B cell (primary cell): ENCODE measurements at regions of chr21 and their contacts with region 1.

Region 1: DNA sequence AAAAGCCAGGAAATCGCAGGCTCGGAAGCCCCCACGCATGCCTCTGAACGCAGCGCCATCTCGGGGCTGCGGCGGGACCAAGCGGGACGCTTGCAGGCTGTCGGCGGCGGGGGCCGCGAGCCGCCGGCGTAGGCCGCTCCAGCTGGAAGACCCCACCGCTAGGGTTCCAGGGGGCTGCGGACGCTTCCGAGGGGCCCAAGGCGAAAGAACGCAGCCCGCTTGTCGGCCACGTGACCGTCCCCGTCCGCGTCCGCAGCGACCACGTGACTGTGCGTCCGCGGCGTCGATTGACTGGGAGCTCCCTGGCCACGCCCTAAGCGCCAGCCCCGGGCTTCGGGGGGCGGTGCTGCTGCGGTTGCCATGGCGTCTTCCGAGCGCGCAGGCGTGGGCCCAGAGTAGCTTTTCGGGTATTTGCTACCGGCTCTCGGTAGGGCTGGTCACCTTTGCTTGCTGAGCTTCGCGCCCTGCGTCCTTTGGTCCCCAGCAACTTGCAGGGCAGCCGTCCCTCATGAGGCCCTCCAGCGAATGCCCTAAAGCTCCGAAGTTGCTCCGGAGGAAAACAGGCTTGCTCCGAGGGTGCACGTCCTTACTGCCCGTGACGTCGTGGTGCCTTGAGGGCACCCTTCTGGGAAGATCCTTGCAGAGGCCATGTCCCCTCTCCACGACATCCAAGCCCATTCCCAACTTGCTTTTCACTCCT is 197.2 kb downstream of the DYRK1A start:
- DNase-seq: peak; percentile 94
- ATAC-seq: peak; percentile 92
- H3K4me3 ChIP-seq: peak overlapping the region; percentile 61 to 91 (median 82)
- H3K4me3 Mint-ChIP-seq: peak overlapping the region; percentile 97
- H3K27ac ChIP-seq: peak overlapping the region; percentile 70 to 88
- H3K27ac Mint-ChIP-seq: peak overlapping the region; percentile 97
- H3K4me1 ChIP-seq: peaks cover 10 to 19% of the 10 kb centered on the region in 2 donors
- H3K4me1 Mint-ChIP-seq: peaks cover 18% of the 10 kb centered on the region
- H3K27me3 ChIP-seq: no peaks in the 10 kb centered on the region
- H3K27me3 Mint-ChIP-seq: peaks cover 3% of the 10 kb centered on the region
- CTCF ChIP-seq: peak; percentile 61

Region 2: GRCh38 chr21:36966066-36966820 is 597.5 kb before region 1 on chr21 and contains the start of gene HLCS:
- CTCF ChIA-PET with region 1: no interaction called
- POLR2A ChIA-PET with region 1: interaction called, 6 read pairs
- intact Hi-C with region 1: loop called (anchors 5 kb)
- DNase-seq: peak; percentile 87
- ATAC-seq: peak; percentile 90
- H3K4me3 ChIP-seq: peak within 1 kb of the TSS in 4 of 5 experiments; percentile 43 to 73 (median 69)
- H3K4me3 Mint-ChIP-seq: peak within 1 kb of the TSS; percentile 92
- H3K27ac ChIP-seq: peak within 1 kb of the TSS; percentile 39 to 81
- H3K27ac Mint-ChIP-seq: peak within 1 kb of the TSS; percentile 89
- H3K4me1 ChIP-seq: peaks cover 13 to 16% of the 10 kb centered on the region in 2 donors
- H3K4me1 Mint-ChIP-seq: peaks cover 15% of the 10 kb centered on the region
- H3K27me3 ChIP-seq: no peaks in the 10 kb centered on the region
- H3K27me3 Mint-ChIP-seq: no peaks in the 10 kb centered on the region
- CTCF ChIP-seq: peak; percentile 22
- total RNA-seq, gene HLCS: 14.7 and 16.2 TPM in 2 replicates

Region 3: GRCh38 chr21:37220981-37221664 is 342.7 kb before region 1 on chr21:
- CTCF ChIA-PET with region 1: interaction called, 3 read pairs
- POLR2A ChIA-PET with region 1: no interaction called
- intact Hi-C with region 1: loop called (anchors 1 kb)
- DNase-seq: peak; percentile 93
- ATAC-seq: peak; percentile 90
- H3K4me3 ChIP-seq: peak overlapping the region; percentile 36 to 86 (median 78)
- H3K4me3 Mint-ChIP-seq: peak overlapping the region; percentile 96
- H3K27ac ChIP-seq: peak overlapping the region; percentile 68 to 72
- H3K27ac Mint-ChIP-seq: peak overlapping the region; percentile 91
- H3K4me1 ChIP-seq: peaks cover 15 to 30% of the 10 kb centered on the region in 2 donors
- H3K4me1 Mint-ChIP-seq: peaks cover 27% of the 10 kb centered on the region
- H3K27me3 ChIP-seq: no peaks in the 10 kb centered on the region
- H3K27me3 Mint-ChIP-seq: no peaks in the 10 kb centered on the region
- CTCF ChIP-seq: peak; percentile 24

Region 4: GRCh38 chr21:37267269-37268184 is 296.3 kb before region 1 on chr21 and contains the start of gene VPS26C:
- CTCF ChIA-PET with region 1: interaction called, 4 read pairs
- POLR2A ChIA-PET with region 1: interaction called, 9 read pairs
- intact Hi-C with region 1: loop called (anchors 1 kb)
- DNase-seq: peak; percentile 100
- ATAC-seq: peak; percentile 86
- H3K4me3 ChIP-seq: peak within 1 kb of the TSS; percentile 66 to 99 (median 99)
- H3K4me3 Mint-ChIP-seq: peak within 1 kb of the TSS; percentile 96
- H3K27ac ChIP-seq: peak within 1 kb of the TSS; percentile 99
- H3K27ac Mint-ChIP-seq: peak within 1 kb of the TSS; percentile 99
- H3K4me1 ChIP-seq: peaks cover 14% of the 10 kb centered on the region in 2 donors
- H3K4me1 Mint-ChIP-seq: peaks cover 35% of the 10 kb centered on the region
- H3K27me3 ChIP-seq: peaks cover 0 to 3% (median 0%) of the 10 kb centered on the region in 4 experiments
- H3K27me3 Mint-ChIP-seq: no peaks in the 10 kb centered on the region
- CTCF ChIP-seq: no peak
- total RNA-seq, gene VPS26C: 58.6 and 59.6 TPM in 2 replicates

Region 5: GRCh38 chr21:39313571-39314142 is 1749.9 kb after region 1 on chr21 and contains the start of gene BRWD1:
- CTCF ChIA-PET with region 1: no interaction called
- POLR2A ChIA-PET with region 1: no interaction called
- intact Hi-C with region 1: loop called (anchors 5 kb)
- DNase-seq: peak; percentile 97
- ATAC-seq: peak; percentile 52
- H3K4me3 ChIP-seq: peak within 1 kb of the TSS; percentile 50 to 83 (median 72)
- H3K4me3 Mint-ChIP-seq: peak within 1 kb of the TSS; percentile 95
- H3K27ac ChIP-seq: peak within 1 kb of the TSS; percentile 57 to 84
- H3K27ac Mint-ChIP-seq: peak within 1 kb of the TSS; percentile 90
- H3K4me1 ChIP-seq: peaks cover 11 to 29% of the 10 kb centered on the region in 2 donors
- H3K4me1 Mint-ChIP-seq: peaks cover 43% of the 10 kb centered on the region
- H3K27me3 ChIP-seq: no peaks in the 10 kb centered on the region
- H3K27me3 Mint-ChIP-seq: no peaks in the 10 kb centered on the region
- CTCF ChIP-seq: peak; percentile 55
- total RNA-seq, gene BRWD1: 90.8 and 93.9 TPM in 2 replicates